Vagina (tissue), 2 donors: ENCODE measurements at regions of chr3 and their contacts with region 1.

Region 1: DNA sequence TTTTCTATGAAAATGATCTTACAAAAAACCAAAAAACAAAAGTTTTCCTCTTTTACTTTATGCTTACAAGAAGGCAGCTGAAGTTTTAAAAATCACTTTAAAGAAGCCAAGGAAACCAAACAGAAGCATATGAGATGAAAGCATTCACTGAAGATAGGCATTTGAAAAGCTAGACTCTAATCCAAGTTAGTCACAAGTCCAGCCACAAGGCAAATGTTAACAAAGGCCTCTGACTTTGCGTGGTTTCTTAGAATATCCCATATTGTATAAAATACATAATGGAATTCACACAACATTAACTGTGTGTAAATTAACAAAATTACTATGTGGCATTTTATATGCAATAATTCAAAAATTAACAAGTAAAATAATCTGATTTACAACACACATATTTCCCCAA is 17.7 kb downstream of the MRPL3 start:
- DNase-seq: no peak
- H3K4me3 ChIP-seq: no peak overlapping the region
- H3K27ac ChIP-seq: no peak overlapping the region
- H3K4me1 ChIP-seq: no peaks in the 10 kb centered on the region
- H3K27me3 ChIP-seq: no peaks in the 10 kb centered on the region
- CTCF ChIP-seq: no peak
- POLR2A ChIP-seq: no peak

Region 2: GRCh38 chr3:131470377-131470776 is 14.7 kb before region 1 on chr3:
- intact Hi-C with region 1: no loop called
- DNase-seq: no peak
- H3K4me3 ChIP-seq: no peak overlapping the region
- H3K27ac ChIP-seq: no peak overlapping the region
- H3K4me1 ChIP-seq: no peaks in the 10 kb centered on the region
- H3K27me3 ChIP-seq: no peaks in the 10 kb centered on the region
- CTCF ChIP-seq: no peak
- POLR2A ChIP-seq: no peak

Region 3: GRCh38 chr3:131735116-131735515 is 250.0 kb after region 1 on chr3:
- intact Hi-C with region 1: no loop called
- DNase-seq: no peak
- H3K4me3 ChIP-seq: no peak overlapping the region
- H3K27ac ChIP-seq: no peak overlapping the region
- H3K4me1 ChIP-seq: no peaks in the 10 kb centered on the region
- H3K27me3 ChIP-seq: no peaks in the 10 kb centered on the region
- CTCF ChIP-seq: no peak
- POLR2A ChIP-seq: no peak

Region 4: DNA sequence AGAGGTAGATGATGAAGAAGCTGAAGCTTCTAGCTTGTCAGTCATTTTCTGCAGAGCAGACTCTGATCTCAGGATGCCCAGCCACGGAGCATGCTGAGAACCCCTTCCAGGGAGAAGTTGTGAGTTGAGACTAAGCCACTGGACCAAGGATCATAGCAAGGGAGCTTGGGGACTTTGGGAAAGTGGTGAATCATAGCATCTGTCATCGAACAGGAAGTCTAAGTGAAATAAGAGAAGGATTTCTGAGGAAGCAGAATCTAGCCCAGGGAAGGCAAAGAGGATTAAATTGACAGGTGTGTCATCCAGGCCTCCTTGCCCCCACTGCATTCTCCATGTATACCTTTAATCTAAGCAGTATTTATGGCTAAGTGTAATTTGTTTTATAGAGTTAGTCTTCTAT is 1481.3 kb after region 1 on chr3:
- intact Hi-C with region 1: loop called (anchors 5 kb)
- DNase-seq: no peak
- H3K4me3 ChIP-seq: no peak overlapping the region
- H3K27ac ChIP-seq: no peak overlapping the region
- H3K4me1 ChIP-seq: no peaks in the 10 kb centered on the region
- H3K27me3 ChIP-seq: no peaks in the 10 kb centered on the region
- CTCF ChIP-seq: no peak
- POLR2A ChIP-seq: no peak